T-cell (primary cell): ENCODE measurements at regions of chr1 and their contacts with region 1.

Region 1: GRCh38 chr1:202926720-202927491 is at the start of gene KLHL12:
- DNase-seq: peak; percentile 87 to 97 (median 93)
- ATAC-seq: peak; percentile 93 to 96 (median 95)
- H3K4me3 ChIP-seq: peak within 1 kb of the TSS; percentile 93 to 96
- H3K4me3 Mint-ChIP-seq: peak within 1 kb of the TSS; percentile 90 to 92 (median 90)
- H3K27ac ChIP-seq: peak within 1 kb of the TSS; percentile 86
- H3K27ac Mint-ChIP-seq: peak within 1 kb of the TSS; percentile 91 to 93
- H3K4me1 ChIP-seq: peaks cover 8 to 17% of the 10 kb centered on the region in 2 experiments
- H3K4me1 Mint-ChIP-seq: peaks cover 32 to 34% (median 33%) of the 10 kb centered on the region in 3 donors
- H3K27me3 ChIP-seq: peaks cover 0 to 3% of the 10 kb centered on the region in 2 experiments
- H3K27me3 Mint-ChIP-seq: no peaks in the 10 kb centered on the region
- total RNA-seq, gene KLHL12: 18.8 to 22.7 (median 22.0) TPM

Region 2: GRCh38 chr1:202728951-202729350 is 198.0 kb before region 1 on chr1:
- CTCF ChIA-PET with region 1: no interaction called
- POLR2A ChIA-PET with region 1: interaction called in 1 of 2 experiments, 11 read pairs
- DNase-seq: no peak
- ATAC-seq: no peak
- H3K4me3 ChIP-seq: no peak overlapping the region
- H3K4me3 Mint-ChIP-seq: no peak overlapping the region
- H3K27ac ChIP-seq: no peak overlapping the region
- H3K27ac Mint-ChIP-seq: no peak overlapping the region
- H3K4me1 ChIP-seq: no peaks in the 10 kb centered on the region
- H3K4me1 Mint-ChIP-seq: no peaks in the 10 kb centered on the region
- H3K27me3 ChIP-seq: no peaks in the 10 kb centered on the region
- H3K27me3 Mint-ChIP-seq: no peaks in the 10 kb centered on the region

Region 3: DNA sequence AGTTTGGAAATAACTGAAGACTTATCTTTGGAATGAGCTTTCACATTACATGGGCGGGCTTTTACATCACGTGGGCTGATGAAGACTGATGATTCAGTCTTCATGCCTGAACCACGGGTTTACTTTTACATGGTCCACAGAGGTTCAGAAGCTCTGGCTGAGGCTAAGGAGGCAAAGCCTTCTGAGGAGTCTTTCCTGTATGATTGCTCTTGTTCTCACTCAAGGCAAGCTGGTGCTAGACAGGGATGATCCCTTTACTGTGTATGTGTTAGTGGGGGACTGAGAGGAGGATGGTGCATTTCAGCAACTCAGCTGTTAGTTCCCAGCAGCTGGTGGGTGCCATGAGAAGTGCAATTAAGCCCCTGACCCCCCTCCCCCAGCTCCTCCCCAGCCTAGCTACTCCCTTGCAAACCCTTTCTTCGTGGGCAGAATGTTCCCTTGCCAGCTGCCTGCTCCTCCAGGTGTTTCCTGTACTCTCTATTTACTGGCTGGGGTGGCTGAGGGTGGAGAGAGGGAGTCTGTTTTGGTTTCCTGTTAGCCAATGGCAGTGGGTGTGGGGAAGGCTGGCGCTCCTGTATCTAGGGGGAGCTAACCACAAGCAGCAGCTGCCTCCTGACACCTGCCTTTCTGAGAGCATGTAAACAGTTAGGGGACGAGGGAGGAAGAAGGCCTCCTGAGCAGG is 393.8 kb after region 1 on chr1:
- CTCF ChIA-PET with region 1: no interaction called
- POLR2A ChIA-PET with region 1: interaction called in 1 of 2 experiments, 14 read pairs
- DNase-seq: peak; percentile 64 to 93 (median 81)
- ATAC-seq: peak; percentile 74 to 83 (median 80)
- H3K4me3 ChIP-seq: no peak overlapping the region
- H3K4me3 Mint-ChIP-seq: peak overlapping the region; percentile 55 to 71 (median 70)
- H3K27ac ChIP-seq: peak overlapping the region; percentile 100
- H3K27ac Mint-ChIP-seq: peak overlapping the region; percentile 97
- H3K4me1 ChIP-seq: peaks cover 69 to 75% of the 10 kb centered on the region in 2 experiments
- H3K4me1 Mint-ChIP-seq: peaks cover 89 to 94% (median 94%) of the 10 kb centered on the region in 3 donors
- H3K27me3 ChIP-seq: no peaks in the 10 kb centered on the region
- H3K27me3 Mint-ChIP-seq: no peaks in the 10 kb centered on the region